Activated CD4-positive, alpha-beta memory T cell treated with anti-CD3 and anti-CD28 coated beads for 36 hours (primary cell): ENCODE measurements at regions of chr1 and their contacts with region 1.

Region 1: GRCh38 chr1:154669464-154670282 is 61.7 kb upstream of the ADAR start:
- DNase-seq: peak; percentile 86
- H3K4me3 Mint-ChIP-seq: no peak overlapping the region
- H3K27ac Mint-ChIP-seq: peak overlapping the region; percentile 24
- H3K4me1 Mint-ChIP-seq: no peaks in the 10 kb centered on the region
- H3K27me3 Mint-ChIP-seq: no peaks in the 10 kb centered on the region

Region 2: DNA sequence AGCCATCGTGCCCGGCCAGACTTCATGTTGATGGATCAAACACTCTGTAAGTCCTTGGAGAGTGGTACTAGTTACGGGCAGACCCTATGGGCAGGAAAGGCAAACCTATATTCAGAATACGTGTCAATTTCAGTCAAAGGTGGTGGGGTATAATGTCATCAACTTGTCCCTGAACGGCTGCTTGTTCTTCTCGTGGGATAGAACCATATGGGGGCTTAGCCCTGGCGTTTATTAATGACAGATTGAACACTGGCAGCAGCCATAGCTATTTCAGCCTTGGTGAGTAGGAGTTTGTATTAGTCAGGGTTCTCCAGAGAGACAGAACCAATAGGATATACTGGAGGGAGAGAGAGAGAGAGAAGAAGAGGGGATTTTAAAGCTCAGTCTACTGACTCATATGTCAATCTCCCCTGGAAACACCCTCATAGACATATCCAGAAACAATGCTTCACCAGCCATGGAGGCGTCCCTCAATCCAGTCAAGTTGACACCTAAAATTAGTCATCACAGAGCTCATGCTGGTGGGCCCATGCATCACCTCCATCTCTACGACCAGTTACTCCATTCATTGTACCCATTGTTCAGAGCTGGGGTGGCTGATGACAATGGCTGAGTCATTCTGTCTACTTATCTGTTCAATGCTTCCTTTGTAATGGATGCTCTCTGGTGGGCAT is 364.9 kb before region 1 on chr1:
- CTCF ChIA-PET with region 1: no interaction called
- POLR2A ChIA-PET with region 1: no interaction called
- intact Hi-C with region 1: no loop called
- DNase-seq: peak; percentile 83
- H3K4me3 Mint-ChIP-seq: no peak overlapping the region
- H3K27ac Mint-ChIP-seq: peak overlapping the region; percentile 38
- H3K4me1 Mint-ChIP-seq: peaks cover 29% of the 10 kb centered on the region
- H3K27me3 Mint-ChIP-seq: no peaks in the 10 kb centered on the region

Region 3: DNA sequence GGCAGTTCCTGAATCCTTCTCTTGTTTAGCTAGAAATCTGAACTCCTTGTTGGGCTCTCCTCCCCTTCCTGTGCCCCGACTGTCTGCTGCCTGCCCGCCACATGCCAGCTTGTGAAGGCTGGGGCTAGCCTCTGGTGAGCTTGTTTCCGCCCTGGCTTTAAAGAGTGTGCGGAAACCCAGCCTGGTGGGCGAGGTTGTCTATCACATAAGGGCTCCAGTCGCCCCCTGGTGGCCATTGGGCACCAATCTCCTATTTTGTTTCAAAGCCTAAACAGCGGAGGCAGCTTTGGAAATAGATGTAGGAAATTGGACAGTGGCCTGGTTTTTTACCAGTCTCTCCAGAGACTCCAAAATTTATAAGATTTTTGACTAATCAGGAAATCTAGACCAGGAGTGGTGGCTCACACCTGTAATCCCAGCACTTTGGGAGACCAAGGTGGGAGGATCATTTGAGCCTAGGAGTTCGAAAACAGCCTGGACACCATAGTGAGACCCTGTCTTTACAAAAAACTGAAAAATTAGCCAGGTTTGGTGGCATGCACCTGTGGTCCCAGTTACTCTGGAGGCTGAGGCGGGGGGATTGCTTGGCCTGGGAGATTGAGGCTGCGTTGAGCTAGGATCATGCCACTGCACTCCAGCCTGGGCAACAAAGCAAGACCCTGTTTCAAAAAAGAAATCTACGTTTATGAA is 334.5 kb before region 1 on chr1:
- CTCF ChIA-PET with region 1: no interaction called
- POLR2A ChIA-PET with region 1: no interaction called
- intact Hi-C with region 1: no loop called
- DNase-seq: peak; percentile 94
- H3K4me3 Mint-ChIP-seq: no peak overlapping the region
- H3K27ac Mint-ChIP-seq: peak overlapping the region; percentile 79
- H3K4me1 Mint-ChIP-seq: peaks cover 66% of the 10 kb centered on the region
- H3K27me3 Mint-ChIP-seq: no peaks in the 10 kb centered on the region

Region 4: GRCh38 chr1:154747740-154748404 is 78.2 kb after region 1 on chr1:
- CTCF ChIA-PET with region 1: interaction called, 12 read pairs
- POLR2A ChIA-PET with region 1: interaction called, 4 read pairs
- intact Hi-C with region 1: loop called (anchors 2 kb)
- DNase-seq: peak; percentile 78
- H3K4me3 Mint-ChIP-seq: peak overlapping the region; percentile 58
- H3K27ac Mint-ChIP-seq: peak overlapping the region; percentile 83
- H3K4me1 Mint-ChIP-seq: peaks cover 68% of the 10 kb centered on the region
- H3K27me3 Mint-ChIP-seq: no peaks in the 10 kb centered on the region

Region 5: DNA sequence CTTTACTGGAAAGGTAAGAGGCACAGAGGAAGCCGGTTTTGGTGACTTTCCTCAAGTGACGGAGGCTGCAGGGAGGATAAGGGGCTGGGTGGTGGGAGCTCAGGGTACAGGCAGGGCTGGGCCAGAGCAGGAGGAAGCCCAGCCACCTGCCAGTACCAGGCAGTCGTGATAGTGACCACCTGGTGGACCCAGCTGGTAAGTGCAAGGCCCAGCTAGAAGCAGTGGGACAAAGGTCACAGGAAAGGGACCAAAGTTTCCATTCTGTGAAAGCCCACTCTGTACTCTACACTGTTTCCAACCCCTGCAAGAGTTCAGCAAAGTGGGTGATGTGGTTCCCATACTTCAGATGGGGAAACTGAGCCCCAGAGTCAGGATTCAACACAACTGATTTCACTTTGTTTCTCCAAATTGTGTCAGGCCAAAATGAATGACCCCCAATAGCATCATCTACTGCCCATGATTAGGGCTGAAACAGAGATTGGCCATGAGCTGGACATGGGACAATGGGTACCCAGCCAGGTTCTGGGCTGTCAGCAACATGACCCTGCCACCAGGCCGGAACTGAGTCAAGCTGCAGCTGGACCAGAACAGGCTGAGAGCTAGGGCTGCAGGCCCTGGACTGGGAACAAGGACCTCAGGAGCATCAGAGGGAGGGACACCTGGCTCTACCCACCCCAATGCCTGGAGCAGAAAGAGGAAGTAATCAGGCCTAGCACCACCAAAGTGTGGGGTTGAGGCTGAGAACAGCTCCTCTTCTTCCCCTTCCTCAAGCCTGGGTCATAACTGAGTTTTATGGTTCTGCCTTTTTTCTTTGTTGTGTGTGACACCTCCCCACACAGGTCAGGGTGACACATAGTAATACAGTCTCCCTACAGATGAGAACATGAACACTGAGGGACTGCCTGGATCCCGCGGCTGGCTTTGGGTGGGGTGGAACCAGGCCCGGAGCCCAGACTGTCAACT is 150.2 kb after region 1 on chr1:
- CTCF ChIA-PET with region 1: interaction called, 18 read pairs
- POLR2A ChIA-PET with region 1: no interaction called
- intact Hi-C with region 1: no loop called
- DNase-seq: peak; percentile 26
- H3K4me3 Mint-ChIP-seq: no peak overlapping the region
- H3K27ac Mint-ChIP-seq: no peak overlapping the region
- H3K4me1 Mint-ChIP-seq: no peaks in the 10 kb centered on the region
- H3K27me3 Mint-ChIP-seq: no peaks in the 10 kb centered on the region

Region 6: GRCh38 chr1:154847891-154848290 is 178.2 kb after region 1 on chr1:
- CTCF ChIA-PET with region 1: interaction called, 12 read pairs
- POLR2A ChIA-PET with region 1: no interaction called
- intact Hi-C with region 1: no loop called
- DNase-seq: no peak
- H3K4me3 Mint-ChIP-seq: no peak overlapping the region
- H3K27ac Mint-ChIP-seq: no peak overlapping the region
- H3K4me1 Mint-ChIP-seq: peaks cover 16% of the 10 kb centered on the region
- H3K27me3 Mint-ChIP-seq: peaks cover 10% of the 10 kb centered on the region

Region 7: GRCh38 chr1:154878371-154879022 is 208.8 kb after region 1 on chr1:
- CTCF ChIA-PET with region 1: interaction called, 61 read pairs
- POLR2A ChIA-PET with region 1: no interaction called
- intact Hi-C with region 1: loop called (anchors 1 kb)
- DNase-seq: peak; percentile 84
- H3K4me3 Mint-ChIP-seq: no peak overlapping the region
- H3K27ac Mint-ChIP-seq: no peak overlapping the region
- H3K4me1 Mint-ChIP-seq: peaks cover 14% of the 10 kb centered on the region
- H3K27me3 Mint-ChIP-seq: peaks cover 3% of the 10 kb centered on the region

Region 8: GRCh38 chr1:155063550-155064110 is 394.0 kb after region 1 on chr1 and contains the start of gene EFNA4:
- CTCF ChIA-PET with region 1: interaction called, 3 read pairs
- POLR2A ChIA-PET with region 1: no interaction called
- intact Hi-C with region 1: loop called (anchors 5 kb)
- DNase-seq: peak; percentile 89
- H3K4me3 Mint-ChIP-seq: peak within 1 kb of the TSS; percentile 80
- H3K27ac Mint-ChIP-seq: peak within 1 kb of the TSS; percentile 31
- H3K4me1 Mint-ChIP-seq: peaks cover 29% of the 10 kb centered on the region
- H3K27me3 Mint-ChIP-seq: no peaks in the 10 kb centered on the region
- total RNA-seq, gene EFNA4: 5.0 to 6.1 TPM